Activated CD4-positive, alpha-beta memory T cell treated with anti-CD3 and anti-CD28 coated beads, Interleukin-2, amount 10 ng/mL, durations not matched to agents 7 days and 5 days (primary cell): ENCODE measurements at regions of chr19 and their contacts with region 1.

Region 1: DNA sequence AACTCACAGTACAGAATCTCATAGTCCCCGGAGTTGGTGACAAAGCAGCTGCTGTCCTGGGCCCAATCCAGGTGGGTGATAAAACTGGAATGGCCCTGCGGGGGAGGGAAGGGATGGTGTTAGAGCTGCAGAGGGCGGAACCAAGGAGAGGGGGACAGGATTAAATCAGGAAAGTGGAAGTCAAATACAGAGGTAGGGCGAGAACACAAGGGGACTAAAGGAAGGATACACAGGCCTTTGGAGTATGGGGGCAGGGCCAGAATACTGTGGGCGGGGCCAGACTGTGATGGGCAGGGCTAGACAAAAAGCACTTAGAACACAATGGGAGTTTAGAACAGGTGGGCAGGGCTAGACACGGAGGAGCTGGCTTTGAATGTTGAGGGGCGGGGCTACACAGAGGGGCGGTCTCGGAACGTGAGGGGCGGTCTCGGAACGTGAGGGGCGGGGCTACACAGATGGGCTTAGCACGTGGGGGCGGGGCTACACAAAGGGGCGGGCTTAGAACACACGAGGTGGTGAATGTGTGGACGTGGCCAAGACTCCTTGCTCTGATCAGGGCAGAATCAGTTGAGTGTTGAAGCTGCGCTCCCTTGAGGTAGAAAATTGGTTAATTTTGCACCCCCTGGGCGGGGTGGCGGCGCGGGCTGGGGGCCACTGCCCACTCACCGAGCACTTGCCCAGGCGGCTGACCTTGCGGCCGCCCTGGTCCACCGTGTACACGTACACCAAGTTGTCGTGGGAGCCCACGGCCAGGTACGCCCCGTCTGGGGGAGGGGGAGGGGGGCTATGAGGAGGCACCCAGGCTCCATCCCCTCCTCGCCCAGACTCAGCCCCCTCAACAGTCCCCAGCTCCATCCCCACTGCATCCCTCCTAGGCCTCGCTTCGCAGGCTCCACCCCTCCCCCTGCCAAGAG is 14.0 kb upstream of the GPR4 start:
- DNase-seq: peak; percentile 86
- H3K4me3 Mint-ChIP-seq: no peak overlapping the region
- H3K27ac Mint-ChIP-seq: peak overlapping the region; percentile 54
- H3K4me1 Mint-ChIP-seq: peaks cover 28% of the 10 kb centered on the region
- H3K27me3 Mint-ChIP-seq: no peaks in the 10 kb centered on the region

Region 2: GRCh38 chr19:45584332-45585157 is 31.5 kb before region 1 on chr19 and contains the start of gene OPA3:
- CTCF ChIA-PET with region 1: no interaction called
- POLR2A ChIA-PET with region 1: interaction called, 15 read pairs
- DNase-seq: peak; percentile 100
- H3K4me3 Mint-ChIP-seq: peak within 1 kb of the TSS; percentile 96
- H3K27ac Mint-ChIP-seq: peak within 1 kb of the TSS; percentile 91
- H3K4me1 Mint-ChIP-seq: peaks cover 22% of the 10 kb centered on the region
- H3K27me3 Mint-ChIP-seq: peaks cover 5% of the 10 kb centered on the region
- total RNA-seq, gene OPA3: 12.0 to 12.9 TPM